Sciatic nerve (tissue), 2 donors: ENCODE measurements at regions of chr5 and their contacts with region 1.

Region 1: GRCh38 chr5:173103411-173103810 is 40.9 kb upstream of the BNIP1 start:
- DNase-seq: no peak
- ATAC-seq: no peak

Region 2: GRCh38 chr5:171794470-171794960 is 1308.9 kb before region 1 on chr5:
- intact Hi-C with region 1: loop called (anchors 5 kb)
- DNase-seq: no peak
- ATAC-seq: no peak